Activated CD8-positive, alpha-beta memory T cell treated with anti-CD3 and anti-CD28 coated beads, Interleukin-2, amount 10 ng/mL, durations not matched to agents 7 days and 5 days (primary cell): ENCODE measurements at regions of chr4 and their contacts with region 1.

Region 1: GRCh38 chr4:83110223-83110945 is 4.1 kb downstream of the PLAC8 start:
- DNase-seq: peak; percentile 94
- ATAC-seq: peak; percentile 88
- H3K4me3 Mint-ChIP-seq: peak overlapping the region; percentile 80
- H3K27ac Mint-ChIP-seq: peak overlapping the region; percentile 92
- H3K4me1 Mint-ChIP-seq: peaks cover 62% of the 10 kb centered on the region
- H3K27me3 Mint-ChIP-seq: no peaks in the 10 kb centered on the region

Region 2: DNA sequence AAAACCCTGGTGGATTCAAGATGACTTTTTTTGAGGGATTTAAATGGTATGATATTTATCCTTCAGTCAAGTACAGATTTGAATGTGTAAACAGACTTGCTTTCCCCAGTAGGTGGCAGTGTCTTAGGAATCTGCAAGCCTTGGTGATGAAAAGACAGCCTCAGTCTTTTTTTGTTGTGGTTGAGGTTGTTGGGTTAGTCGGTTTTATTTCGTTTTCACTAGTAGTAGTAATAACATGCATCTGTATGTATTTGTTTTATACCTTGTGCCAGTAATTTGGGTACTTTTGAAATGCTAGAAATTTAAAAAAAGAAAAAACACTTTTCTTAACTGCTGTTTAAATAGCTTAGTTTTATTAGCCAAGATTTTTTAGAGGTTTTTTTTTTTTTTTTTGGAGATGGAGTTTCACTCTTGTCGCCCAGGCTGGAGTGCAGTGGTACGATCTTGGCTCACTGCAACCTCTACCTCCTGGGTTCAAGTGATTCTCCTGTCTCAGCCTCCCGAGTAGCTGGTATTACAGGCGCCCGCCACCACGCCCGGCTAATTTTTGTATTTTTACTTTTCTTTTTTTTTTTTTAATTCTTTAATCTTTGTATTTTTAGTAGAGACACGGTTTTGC is 36.2 kb before region 1 on chr4:
- CTCF ChIA-PET with region 1: interaction called, 20 read pairs
- DNase-seq: peak; percentile 76
- ATAC-seq: peak; percentile 91
- H3K4me3 Mint-ChIP-seq: no peak overlapping the region
- H3K27ac Mint-ChIP-seq: peak overlapping the region; percentile 52
- H3K4me1 Mint-ChIP-seq: peaks cover 25% of the 10 kb centered on the region
- H3K27me3 Mint-ChIP-seq: no peaks in the 10 kb centered on the region

Region 3: GRCh38 chr4:83095344-83095743 is 15.0 kb before region 1 on chr4:
- CTCF ChIA-PET with region 1: interaction called, 14 read pairs
- DNase-seq: no peak
- ATAC-seq: no peak
- H3K4me3 Mint-ChIP-seq: no peak overlapping the region
- H3K27ac Mint-ChIP-seq: no peak overlapping the region
- H3K4me1 Mint-ChIP-seq: no peaks in the 10 kb centered on the region
- H3K27me3 Mint-ChIP-seq: no peaks in the 10 kb centered on the region

Region 4: DNA sequence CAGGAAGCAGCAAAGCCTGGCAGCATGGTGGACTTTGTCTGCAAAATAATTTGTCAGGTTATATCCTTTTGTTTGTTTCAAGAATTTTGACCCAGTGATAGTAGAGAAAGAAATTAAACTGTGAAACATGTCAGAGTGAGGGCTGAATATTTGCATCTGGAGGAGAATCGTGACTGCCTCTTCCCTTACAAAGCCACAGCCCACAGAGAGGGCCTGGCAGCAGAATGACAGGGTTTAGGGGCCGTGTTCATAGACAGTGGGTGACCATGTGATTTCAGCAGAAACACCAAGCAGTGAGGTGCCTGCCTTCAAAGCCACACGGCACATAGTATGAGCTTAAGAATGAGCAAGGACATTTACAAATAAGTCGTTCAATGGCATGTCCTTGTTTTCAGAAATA is 28.6 kb after region 1 on chr4:
- CTCF ChIA-PET with region 1: interaction called, 10 read pairs
- DNase-seq: peak; percentile 86
- ATAC-seq: peak; percentile 99
- H3K4me3 Mint-ChIP-seq: no peak overlapping the region
- H3K27ac Mint-ChIP-seq: peak overlapping the region; percentile 84
- H3K4me1 Mint-ChIP-seq: peaks cover 26% of the 10 kb centered on the region
- H3K27me3 Mint-ChIP-seq: no peaks in the 10 kb centered on the region

Region 5: DNA sequence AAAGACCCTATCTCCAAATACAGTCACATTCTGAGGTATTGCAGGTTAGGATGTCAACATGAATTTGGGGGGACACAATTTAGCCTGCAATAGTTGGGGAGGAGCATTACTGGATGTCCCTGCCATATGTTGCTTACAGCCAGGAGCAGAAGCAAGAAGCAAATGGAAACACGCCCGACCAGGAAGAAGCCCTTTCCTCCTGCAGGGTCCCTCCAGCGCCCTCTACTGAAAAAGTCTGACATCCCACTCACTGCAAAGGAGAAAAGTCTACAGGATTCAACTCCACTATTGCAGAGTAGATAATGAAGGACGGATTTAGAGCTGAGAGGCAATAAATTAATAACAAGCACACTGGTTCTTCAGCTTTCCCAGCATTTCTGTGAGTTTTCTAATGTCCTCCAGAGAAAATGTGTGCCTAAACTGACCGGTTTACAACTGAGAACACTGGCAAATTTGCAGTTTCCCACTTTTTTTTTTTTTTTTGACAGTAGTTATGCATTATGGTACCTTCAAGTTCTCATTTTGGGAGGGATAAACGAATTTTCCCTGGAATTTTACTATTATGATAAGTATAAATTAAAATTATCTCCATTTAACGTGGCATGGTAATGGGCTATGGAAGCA is 142.5 kb after region 1 on chr4:
- CTCF ChIA-PET with region 1: interaction called, 27 read pairs
- DNase-seq: peak; percentile 85
- ATAC-seq: peak; percentile 89
- H3K4me3 Mint-ChIP-seq: no peak overlapping the region
- H3K27ac Mint-ChIP-seq: no peak overlapping the region
- H3K4me1 Mint-ChIP-seq: peaks cover 14% of the 10 kb centered on the region
- H3K27me3 Mint-ChIP-seq: peaks cover 5% of the 10 kb centered on the region

Region 6: DNA sequence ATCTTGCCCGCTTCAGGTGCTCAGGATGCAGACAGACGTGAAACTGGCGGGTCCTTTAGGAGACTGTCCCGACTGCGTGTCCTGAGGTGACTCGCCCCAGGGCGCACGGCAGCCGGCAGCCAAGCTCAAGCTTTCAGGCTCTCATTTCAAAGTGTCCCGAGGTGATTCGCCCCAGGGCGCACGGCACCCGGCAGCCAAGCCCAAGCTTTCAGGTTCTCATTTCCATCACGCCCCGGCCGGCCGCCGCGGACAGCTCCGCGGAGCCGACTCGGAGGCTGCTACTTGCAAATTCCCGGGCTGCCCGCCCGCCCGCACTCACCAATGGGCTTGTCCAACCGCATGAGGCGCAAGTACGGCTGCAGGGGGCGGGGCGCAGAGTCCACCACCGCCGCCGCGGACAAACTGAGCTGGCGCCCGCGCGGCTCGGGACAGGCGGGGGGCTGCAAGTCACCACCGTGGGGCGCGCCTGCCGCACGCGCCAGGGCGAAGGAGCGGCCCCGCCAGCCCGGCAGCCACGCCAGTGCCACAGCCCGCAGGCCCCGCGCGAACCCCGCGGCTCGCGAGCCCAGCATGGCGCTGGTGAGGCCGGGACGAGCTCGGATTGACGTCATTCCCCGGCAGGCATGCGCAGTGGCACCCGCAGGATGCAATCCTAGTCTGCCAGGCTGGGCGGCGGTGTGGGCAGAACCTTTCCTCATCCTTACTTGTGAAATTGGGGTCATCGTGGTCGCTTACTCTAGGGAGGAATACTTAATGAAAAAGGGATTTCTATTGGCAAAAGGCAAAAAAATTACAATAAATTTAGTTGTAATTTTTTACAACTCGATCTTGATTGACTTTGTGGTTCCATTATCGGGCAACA is 174.0 kb after region 1 on chr4 and contains the start of gene COQ2:
- CTCF ChIA-PET with region 1: interaction called, 14 read pairs
- DNase-seq: peak; percentile 97
- ATAC-seq: peak; percentile 94
- H3K4me3 Mint-ChIP-seq: peak within 1 kb of the TSS; percentile 86
- H3K27ac Mint-ChIP-seq: peak within 1 kb of the TSS; percentile 99
- H3K4me1 Mint-ChIP-seq: peaks cover 46% of the 10 kb centered on the region
- H3K27me3 Mint-ChIP-seq: no peaks in the 10 kb centered on the region
- total RNA-seq, gene COQ2: 20.6 to 21.9 TPM

Region 7: GRCh38 chr4:83362492-83363329 is 252.3 kb after region 1 on chr4:
- CTCF ChIA-PET with region 1: no interaction called
- DNase-seq: no peak
- ATAC-seq: no peak
- H3K4me3 Mint-ChIP-seq: no peak overlapping the region
- H3K27ac Mint-ChIP-seq: no peak overlapping the region
- H3K4me1 Mint-ChIP-seq: peaks cover 7% of the 10 kb centered on the region
- H3K27me3 Mint-ChIP-seq: peaks cover 3% of the 10 kb centered on the region